Activated T-helper 1 cell treated with anti-CD3 and anti-CD28 coated beads, Interleukin-12 subunit alpha, Interleukin-12 subunit beta, Interleukin-2, Interleukin-4 antibody, amounts not matched to agents 30 ng/mL and 10 ng/mL and 1 ng/mL, durations not matched to agents 14 hours and 24 hours and 36 hours (primary cell): ENCODE measurements at regions of chr7 and their contacts with region 1.

Region 1: GRCh38 chr7:25098096-25099046 is 26.7 kb downstream of the CYCS start:
- DNase-seq: peak; percentile 48
- H3K4me3 Mint-ChIP-seq: no peak overlapping the region
- H3K27ac Mint-ChIP-seq: no peak overlapping the region
- H3K4me1 Mint-ChIP-seq: peaks cover 14% of the 10 kb centered on the region
- H3K27me3 Mint-ChIP-seq: peaks cover 17% of the 10 kb centered on the region

Region 2: GRCh38 chr7:23863209-23863798 is 1235.1 kb before region 1 on chr7:
- intact Hi-C with region 1: loop called (anchors 5 kb)
- DNase-seq: no peak
- H3K4me3 Mint-ChIP-seq: no peak overlapping the region
- H3K27ac Mint-ChIP-seq: no peak overlapping the region
- H3K4me1 Mint-ChIP-seq: no peaks in the 10 kb centered on the region
- H3K27me3 Mint-ChIP-seq: peaks cover 9% of the 10 kb centered on the region

Region 3: GRCh38 chr7:24812310-24812945 is 285.9 kb before region 1 on chr7:
- intact Hi-C with region 1: loop called (anchors 1 kb)
- DNase-seq: peak; percentile 30
- H3K4me3 Mint-ChIP-seq: no peak overlapping the region
- H3K27ac Mint-ChIP-seq: no peak overlapping the region
- H3K4me1 Mint-ChIP-seq: peaks cover 2% of the 10 kb centered on the region
- H3K27me3 Mint-ChIP-seq: no peaks in the 10 kb centered on the region

Region 4: GRCh38 chr7:25158966-25159365 is 60.6 kb after region 1 on chr7:
- intact Hi-C with region 1: loop called (anchors 2 kb)
- DNase-seq: no peak
- H3K4me3 Mint-ChIP-seq: no peak overlapping the region
- H3K27ac Mint-ChIP-seq: no peak overlapping the region
- H3K4me1 Mint-ChIP-seq: no peaks in the 10 kb centered on the region
- H3K27me3 Mint-ChIP-seq: no peaks in the 10 kb centered on the region

Region 5: GRCh38 chr7:25238066-25238725 is 139.8 kb after region 1 on chr7:
- intact Hi-C with region 1: no loop called
- DNase-seq: no peak
- H3K4me3 Mint-ChIP-seq: no peak overlapping the region
- H3K27ac Mint-ChIP-seq: no peak overlapping the region
- H3K4me1 Mint-ChIP-seq: no peaks in the 10 kb centered on the region
- H3K27me3 Mint-ChIP-seq: peaks cover 9% of the 10 kb centered on the region